GM12878 (cell line): ENCODE measurements at regions of chr3 and their contacts with region 1.

Region 1: DNA sequence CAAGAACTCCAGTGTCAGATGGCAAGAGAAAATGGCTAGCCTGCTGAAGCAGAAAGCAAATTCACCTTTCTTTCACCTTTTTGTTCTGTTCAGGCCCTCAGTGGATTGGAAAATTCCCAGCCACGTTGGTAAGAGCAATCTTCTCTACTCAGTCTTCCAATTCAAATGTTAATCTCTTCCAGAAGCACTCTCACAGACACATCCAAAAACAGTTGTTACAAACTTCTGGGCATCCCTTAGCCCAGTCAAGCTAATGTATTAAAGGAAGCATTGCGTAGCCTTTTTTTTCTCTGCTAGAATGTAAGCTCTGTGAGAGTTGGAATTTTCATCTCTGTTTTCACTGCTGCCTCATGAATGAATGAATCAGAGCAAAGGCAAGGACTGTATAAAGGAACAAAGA is 109.2 kb upstream of the ROBO2 start:
- DNase-seq: no peak
- ATAC-seq: no peak
- H3K4me3 ChIP-seq: no peak overlapping the region
- H3K27ac ChIP-seq: no peak overlapping the region
- H3K4me1 ChIP-seq: no peaks in the 10 kb centered on the region
- H3K27me3 ChIP-seq: no peaks in the 10 kb centered on the region
- CTCF ChIP-seq: no peak
- EP300 ChIP-seq: no peak
- POLR2A ChIP-seq: no peak
- RAD21 ChIP-seq: no peak

Region 2: DNA sequence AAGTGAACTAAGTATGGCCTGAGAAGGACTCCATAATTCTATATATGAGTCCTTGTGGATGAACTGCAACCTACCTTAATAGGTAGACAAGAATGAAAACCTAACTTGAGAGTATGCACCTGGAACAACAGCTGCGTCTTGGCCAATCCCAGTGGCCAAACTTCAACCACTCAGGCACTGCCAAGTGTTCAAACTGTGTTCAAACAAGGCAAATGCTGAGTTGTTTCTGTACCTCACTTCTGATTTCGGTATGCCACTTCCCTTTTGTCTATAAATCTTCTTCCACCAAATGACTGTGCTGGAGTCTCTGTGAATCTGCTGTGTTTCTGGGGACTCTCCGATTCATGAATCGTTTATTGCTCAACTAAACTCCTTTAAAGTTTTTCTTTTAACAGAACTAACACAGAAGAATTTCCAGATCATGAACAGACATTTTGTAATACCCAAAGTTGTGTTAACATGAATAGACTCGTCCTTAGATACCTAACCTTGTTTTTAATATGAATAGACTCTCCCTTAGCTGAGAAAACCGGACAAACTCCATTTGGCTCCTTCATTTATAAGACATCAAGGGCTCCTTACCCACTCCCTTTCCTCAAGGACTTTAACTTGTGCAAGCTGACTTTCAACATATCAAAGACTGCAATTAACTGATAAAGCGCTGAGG is 1149.5 kb before region 1 on chr3:
- CTCF ChIA-PET with region 1: no interaction called
- POLR2A ChIA-PET with region 1: no interaction called
- RAD21 ChIA-PET with region 1: no interaction called
- SMC1A ChIA-PET with region 1: no interaction called
- in situ Hi-C with region 1: no loop called
- intact Hi-C with region 1: loop called (anchors 10 kb)
- DNase-seq: peak; percentile 53
- ATAC-seq: no peak
- H3K4me3 ChIP-seq: no peak overlapping the region
- H3K27ac ChIP-seq: peak overlapping the region; percentile 61
- H3K4me1 ChIP-seq: no peaks in the 10 kb centered on the region
- H3K27me3 ChIP-seq: no peaks in the 10 kb centered on the region
- CTCF ChIP-seq: no peak
- EP300 ChIP-seq: peak in 1 of 2 experiments; percentile 32; a peak in 1 of 4 replicates
- POLR2A ChIP-seq: no peak
- RAD21 ChIP-seq: no peak

Region 3: GRCh38 chr3:76841747-76842146 is 89.0 kb before region 1 on chr3:
- CTCF ChIA-PET with region 1: no interaction called
- POLR2A ChIA-PET with region 1: no interaction called
- RAD21 ChIA-PET with region 1: no interaction called
- SMC1A ChIA-PET with region 1: no interaction called
- in situ Hi-C with region 1: no loop called
- intact Hi-C with region 1: no loop called
- DNase-seq: no peak
- ATAC-seq: no peak
- H3K4me3 ChIP-seq: no peak overlapping the region
- H3K27ac ChIP-seq: no peak overlapping the region
- H3K4me1 ChIP-seq: no peaks in the 10 kb centered on the region
- H3K27me3 ChIP-seq: no peaks in the 10 kb centered on the region
- CTCF ChIP-seq: no peak
- EP300 ChIP-seq: no peak
- POLR2A ChIP-seq: no peak
- RAD21 ChIP-seq: no peak

Region 4: DNA sequence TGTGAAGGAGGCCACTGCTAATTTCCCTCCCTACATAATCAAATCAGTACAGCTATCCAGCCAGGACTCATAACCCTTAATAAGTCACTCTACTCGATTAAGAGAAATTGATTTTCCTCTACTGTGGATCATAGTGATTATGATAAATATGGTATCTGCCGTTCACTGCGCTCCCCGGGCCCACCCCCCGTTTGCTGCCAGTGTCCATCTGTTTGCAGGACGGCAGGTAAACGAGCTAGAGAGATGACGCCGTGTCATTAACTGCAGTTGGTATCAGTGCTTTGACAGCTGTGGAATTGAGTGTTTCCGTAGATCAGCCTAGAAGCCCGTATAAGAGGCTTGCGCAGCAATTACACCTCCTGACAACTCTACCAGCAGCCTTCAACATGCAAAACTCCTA is 204.1 kb after region 1 on chr3:
- CTCF ChIA-PET with region 1: no interaction called
- POLR2A ChIA-PET with region 1: interaction called, 11 read pairs
- RAD21 ChIA-PET with region 1: no interaction called
- SMC1A ChIA-PET with region 1: no interaction called
- in situ Hi-C with region 1: no loop called
- intact Hi-C with region 1: no loop called
- DNase-seq: no peak
- ATAC-seq: no peak
- H3K4me3 ChIP-seq: no peak overlapping the region
- H3K27ac ChIP-seq: no peak overlapping the region
- H3K4me1 ChIP-seq: no peaks in the 10 kb centered on the region
- H3K27me3 ChIP-seq: no peaks in the 10 kb centered on the region
- CTCF ChIP-seq: no peak
- EP300 ChIP-seq: no peak
- POLR2A ChIP-seq: no peak
- RAD21 ChIP-seq: no peak